GM12878 (cell line): ENCODE measurements at regions of chr4 and their contacts with region 1.

Region 1: GRCh38 chr4:134470544-134470943 is 269.0 kb upstream of the PABPC4L start:
- DNase-seq: no peak
- ATAC-seq: peak; percentile 84
- H3K4me3 ChIP-seq: no peak overlapping the region
- H3K27ac ChIP-seq: no peak overlapping the region
- H3K4me1 ChIP-seq: no peaks in the 10 kb centered on the region
- H3K27me3 ChIP-seq: no peaks in the 10 kb centered on the region
- CTCF ChIP-seq: peak; percentile 23 to 60 (median 42); a peak in 4 of 6 replicates
- EP300 ChIP-seq: no peak
- POLR2A ChIP-seq: no peak
- RAD21 ChIP-seq: peak; percentile 54

Region 2: DNA sequence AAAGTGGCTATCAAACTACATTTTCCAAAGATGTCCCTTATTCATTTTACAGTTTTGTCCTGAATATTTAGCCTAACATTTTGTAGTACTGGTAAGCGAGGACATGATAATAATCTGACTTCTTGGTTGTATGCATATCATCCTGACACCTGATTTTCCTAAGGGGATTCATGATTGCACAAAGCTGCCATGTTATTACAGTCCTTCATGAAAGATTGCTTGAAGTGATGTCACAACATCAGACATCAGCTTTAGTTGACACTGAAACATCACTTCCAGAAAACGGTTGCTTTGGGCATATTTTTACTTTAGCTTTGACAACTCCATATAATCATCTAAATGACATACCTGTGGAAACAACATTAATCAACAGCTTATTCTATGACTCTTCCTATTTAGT is 80.2 kb before region 1 on chr4:
- CTCF ChIA-PET with region 1: no interaction called
- POLR2A ChIA-PET with region 1: no interaction called
- RAD21 ChIA-PET with region 1: no interaction called
- SMC1A ChIA-PET with region 1: no interaction called
- in situ Hi-C with region 1: no loop called
- intact Hi-C with region 1: no loop called
- DNase-seq: no peak
- ATAC-seq: no peak
- H3K4me3 ChIP-seq: no peak overlapping the region
- H3K27ac ChIP-seq: no peak overlapping the region
- H3K4me1 ChIP-seq: no peaks in the 10 kb centered on the region
- H3K27me3 ChIP-seq: no peaks in the 10 kb centered on the region
- CTCF ChIP-seq: no peak
- EP300 ChIP-seq: no peak
- POLR2A ChIP-seq: no peak
- RAD21 ChIP-seq: no peak

Region 3: DNA sequence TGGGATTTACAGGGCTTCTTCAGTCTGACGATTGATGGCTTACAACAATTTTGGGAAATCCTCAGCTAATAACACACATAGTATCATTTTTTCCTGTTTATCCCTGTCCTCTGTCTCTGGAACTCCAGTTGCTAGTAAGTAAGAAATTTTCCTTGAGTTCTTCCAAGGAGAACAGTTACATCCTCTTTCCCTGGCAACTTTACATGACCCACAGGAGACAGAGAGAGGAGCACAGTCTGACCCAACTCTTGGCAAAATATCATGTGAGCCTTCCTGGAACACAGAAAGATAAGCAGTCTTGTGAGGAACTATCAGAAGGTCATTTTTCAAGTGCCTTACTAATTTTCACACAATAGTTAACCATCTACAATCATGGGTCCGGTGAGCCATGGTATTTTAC is 309.7 kb after region 1 on chr4:
- CTCF ChIA-PET with region 1: no interaction called
- POLR2A ChIA-PET with region 1: no interaction called
- RAD21 ChIA-PET with region 1: interaction called, 8 read pairs
- SMC1A ChIA-PET with region 1: interaction called, 3 read pairs
- in situ Hi-C with region 1: no loop called
- intact Hi-C with region 1: loop called (anchors 5 kb)
- DNase-seq: no peak
- ATAC-seq: no peak
- H3K4me3 ChIP-seq: no peak overlapping the region
- H3K27ac ChIP-seq: no peak overlapping the region
- H3K4me1 ChIP-seq: no peaks in the 10 kb centered on the region
- H3K27me3 ChIP-seq: no peaks in the 10 kb centered on the region
- CTCF ChIP-seq: no peak
- EP300 ChIP-seq: no peak
- POLR2A ChIP-seq: no peak
- RAD21 ChIP-seq: no peak

Region 4: DNA sequence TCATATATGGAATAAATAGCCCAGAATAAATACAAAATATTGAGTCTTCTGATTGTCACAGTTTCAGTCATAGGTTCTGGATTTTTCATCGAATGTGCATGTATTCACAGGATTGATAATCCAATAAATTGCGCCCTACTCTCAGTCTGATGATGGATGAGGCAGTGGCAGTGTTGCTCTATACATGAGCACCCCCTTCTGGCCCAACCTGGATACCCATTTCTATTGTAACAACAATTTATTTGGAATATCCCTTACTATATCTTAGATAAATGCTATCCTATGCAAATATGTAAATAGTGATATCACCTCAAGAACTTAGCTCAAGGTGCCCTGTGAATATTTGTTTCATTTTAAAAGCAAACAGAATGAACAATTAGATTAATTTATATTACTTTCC is 464.8 kb after region 1 on chr4:
- CTCF ChIA-PET with region 1: interaction called, 3 read pairs
- POLR2A ChIA-PET with region 1: no interaction called
- RAD21 ChIA-PET with region 1: no interaction called
- SMC1A ChIA-PET with region 1: no interaction called
- in situ Hi-C with region 1: no loop called
- intact Hi-C with region 1: loop called (anchors 1 kb)
- DNase-seq: no peak
- ATAC-seq: peak; percentile 55; the same call in 2 of the 3 replicates
- H3K4me3 ChIP-seq: no peak overlapping the region
- H3K27ac ChIP-seq: no peak overlapping the region
- H3K4me1 ChIP-seq: no peaks in the 10 kb centered on the region
- H3K27me3 ChIP-seq: no peaks in the 10 kb centered on the region
- CTCF ChIP-seq: peak; percentile 21 to 41 (median 22); a peak in 4 of 6 replicates
- EP300 ChIP-seq: no peak
- POLR2A ChIP-seq: no peak
- RAD21 ChIP-seq: peak; percentile 51